ENCODE measurements at regions of chr11 and their contacts with region 1.

Region 1: DNA sequence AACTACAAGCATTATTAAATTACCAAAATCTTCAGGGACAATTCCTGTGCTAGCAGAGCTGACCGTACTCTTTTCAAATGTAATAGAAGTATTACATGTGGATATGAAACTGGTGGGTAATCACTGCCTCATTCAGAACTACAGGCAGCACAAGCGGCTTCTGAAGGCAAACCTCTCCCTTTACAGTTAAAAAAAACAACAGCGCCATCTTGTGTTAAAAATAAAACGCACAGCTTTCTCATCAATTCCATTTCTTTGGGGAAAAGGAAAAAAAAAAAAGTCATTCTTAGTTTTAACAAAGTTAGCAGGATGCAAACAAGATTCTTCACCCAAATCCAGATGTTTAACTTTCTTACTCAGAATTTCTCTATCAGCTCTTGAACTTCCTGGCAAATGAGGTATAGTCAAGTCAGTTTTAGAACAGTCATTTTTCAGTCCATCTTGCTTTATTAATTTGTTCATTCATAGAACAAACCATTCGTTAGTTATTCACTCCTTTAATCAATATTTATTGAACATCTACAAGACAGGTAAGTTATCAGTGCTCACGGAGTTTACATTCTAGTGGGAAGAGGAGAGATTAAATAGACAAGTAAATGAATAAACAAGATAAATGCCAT is 331.8 kb upstream of the MPPED2 start:
- DNase-seq: no peak
- ATAC-seq: peak; percentile 47 to 59

Region 2: GRCh38 chr11:29432719-29433325 is 1485.1 kb before region 1 on chr11:
- intact Hi-C with region 1: loop called in 1 of 2 experiments (anchors 5 kb)
- DNase-seq: no peak
- ATAC-seq: no peak

Region 3: GRCh38 chr11:30128269-30128932 is 789.6 kb before region 1 on chr11:
- intact Hi-C with region 1: loop called in 1 of 2 experiments (anchors 10 kb)
- DNase-seq: no peak
- ATAC-seq: no peak

Region 4: GRCh38 chr11:30346068-30346688 is 571.8 kb before region 1 on chr11:
- intact Hi-C with region 1: loop called (anchors 5 to 10 kb)
- DNase-seq: no peak
- ATAC-seq: peak; percentile 34 to 68

Region 5: GRCh38 chr11:30710221-30710620 is 207.7 kb before region 1 on chr11:
- intact Hi-C with region 1: no loop called
- DNase-seq: no peak
- ATAC-seq: peak in 1 of 2 donors; percentile 73

Region 6: GRCh38 chr11:30735946-30736345 is 182.0 kb before region 1 on chr11:
- intact Hi-C with region 1: loop called (anchors 10 kb)
- DNase-seq: no peak
- ATAC-seq: no peak

Region 7: DNA sequence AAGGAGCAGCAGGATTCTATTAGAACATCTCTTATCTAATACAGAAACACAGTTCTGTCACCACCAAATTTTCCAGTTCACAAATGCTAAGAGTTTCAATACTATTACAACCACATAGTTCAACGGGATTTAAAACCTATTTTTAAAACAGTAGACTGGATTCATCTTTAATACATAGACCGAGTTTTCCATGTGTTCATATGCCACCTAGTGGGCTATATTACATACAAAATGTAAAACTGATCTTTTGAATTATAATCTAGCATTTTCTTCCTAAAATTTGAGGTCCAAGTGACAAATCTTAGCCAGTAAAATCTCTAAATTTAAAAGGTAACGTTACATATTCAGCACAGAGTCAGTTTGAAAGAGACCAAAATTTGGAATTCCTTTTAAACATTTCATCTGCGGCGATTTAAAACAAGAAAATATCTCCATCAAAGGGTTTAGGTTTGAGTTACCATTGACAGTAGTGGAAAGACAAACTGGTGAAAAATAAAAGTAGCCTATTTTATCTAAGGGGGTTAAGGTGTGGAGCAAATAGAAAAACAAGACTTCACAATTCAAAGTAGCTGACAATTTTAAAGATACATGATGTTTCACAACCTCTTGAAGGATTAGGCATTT is 62.5 kb before region 1 on chr11:
- intact Hi-C with region 1: loop called in 1 of 2 experiments (anchors 5 kb)
- DNase-seq: no peak
- ATAC-seq: no peak

Region 8: DNA sequence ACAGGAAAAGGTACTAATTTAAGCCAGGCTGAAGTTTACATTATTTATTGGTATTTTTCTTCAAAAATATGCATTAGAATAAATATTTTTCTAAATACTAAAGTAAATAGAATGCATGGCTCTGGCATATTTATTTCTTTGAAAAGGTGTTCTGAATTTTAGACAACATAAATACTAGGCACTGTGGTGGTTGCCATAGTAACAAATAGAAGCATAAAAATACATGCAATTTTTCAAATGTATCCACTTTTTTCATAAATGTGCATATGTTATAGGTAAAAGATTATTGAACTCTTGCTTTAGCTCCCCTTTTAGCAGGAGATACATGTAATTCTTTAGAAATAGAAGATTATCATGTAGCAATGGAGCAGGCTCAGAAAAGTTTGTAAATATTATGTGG is 433.2 kb after region 1 on chr11:
- intact Hi-C with region 1: no loop called
- DNase-seq: no peak
- ATAC-seq: no peak